Activated B cell treated with CpG ODN at 0.5 μM for 24 hours (primary cell): ENCODE measurements at regions of chr3 and their contacts with region 1.

Region 1: DNA sequence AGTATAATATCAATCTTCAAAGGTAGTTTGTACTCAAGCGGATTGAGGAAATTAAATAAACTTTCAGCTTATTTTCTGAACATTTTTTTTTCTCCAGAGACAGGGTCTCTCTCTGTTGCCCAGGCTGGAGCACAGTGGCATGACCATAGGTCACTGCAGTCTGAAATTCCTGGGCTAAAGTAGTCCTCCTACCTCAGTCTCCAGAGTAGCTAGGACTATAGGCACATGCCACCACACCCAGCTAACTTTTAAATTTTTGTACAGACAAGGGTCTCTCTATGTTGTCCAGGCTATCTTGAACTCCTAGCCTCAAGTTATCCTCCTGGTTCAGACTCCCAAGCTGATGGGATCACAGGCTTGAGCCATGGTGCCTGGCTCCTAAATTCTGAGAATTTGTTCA is 97.1 kb downstream of the FAIM start:
- DNase-seq: no peak
- ATAC-seq: no peak
- H3K4me3 Mint-ChIP-seq: no peak overlapping the region
- H3K27ac Mint-ChIP-seq: no peak overlapping the region
- H3K4me1 Mint-ChIP-seq: no peaks in the 10 kb centered on the region
- H3K27me3 Mint-ChIP-seq: no peaks in the 10 kb centered on the region
- CTCF ChIP-seq: no peak

Region 2: GRCh38 chr3:137032465-137033120 is 1673.1 kb before region 1 on chr3:
- CTCF ChIA-PET with region 1: no interaction called
- POLR2A ChIA-PET with region 1: no interaction called
- intact Hi-C with region 1: no loop called
- DNase-seq: peak; percentile 61
- ATAC-seq: peak; percentile 85
- H3K4me3 Mint-ChIP-seq: peak overlapping the region; percentile 68
- H3K27ac Mint-ChIP-seq: no peak overlapping the region
- H3K4me1 Mint-ChIP-seq: peaks cover 7% of the 10 kb centered on the region
- H3K27me3 Mint-ChIP-seq: peaks cover 32% of the 10 kb centered on the region
- CTCF ChIP-seq: peak; percentile 97

Region 3: DNA sequence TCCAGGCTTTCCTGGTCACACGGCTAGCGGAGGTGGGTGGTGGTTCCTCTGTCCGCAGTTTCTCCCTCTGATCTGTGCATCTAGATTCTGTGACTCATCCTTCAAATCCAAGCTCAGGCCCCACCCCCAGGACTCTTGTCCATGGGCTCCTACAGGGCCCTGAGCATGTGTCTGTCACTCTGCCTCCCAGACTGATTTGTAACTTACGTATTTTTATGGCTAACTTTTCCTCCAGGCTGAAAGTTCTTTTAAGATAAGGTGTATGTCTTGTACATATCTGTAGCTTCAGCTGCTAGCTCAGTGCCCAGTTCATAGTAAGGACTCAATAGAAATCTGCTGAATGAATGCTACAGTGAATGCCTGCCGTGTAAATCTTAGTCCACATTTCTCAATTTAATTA is 263.2 kb before region 1 on chr3:
- CTCF ChIA-PET with region 1: no interaction called
- POLR2A ChIA-PET with region 1: no interaction called
- intact Hi-C with region 1: no loop called
- DNase-seq: no peak
- ATAC-seq: no peak
- H3K4me3 Mint-ChIP-seq: no peak overlapping the region
- H3K27ac Mint-ChIP-seq: no peak overlapping the region
- H3K4me1 Mint-ChIP-seq: no peaks in the 10 kb centered on the region
- H3K27me3 Mint-ChIP-seq: peaks cover 21% of the 10 kb centered on the region
- CTCF ChIP-seq: no peak

Region 4: DNA sequence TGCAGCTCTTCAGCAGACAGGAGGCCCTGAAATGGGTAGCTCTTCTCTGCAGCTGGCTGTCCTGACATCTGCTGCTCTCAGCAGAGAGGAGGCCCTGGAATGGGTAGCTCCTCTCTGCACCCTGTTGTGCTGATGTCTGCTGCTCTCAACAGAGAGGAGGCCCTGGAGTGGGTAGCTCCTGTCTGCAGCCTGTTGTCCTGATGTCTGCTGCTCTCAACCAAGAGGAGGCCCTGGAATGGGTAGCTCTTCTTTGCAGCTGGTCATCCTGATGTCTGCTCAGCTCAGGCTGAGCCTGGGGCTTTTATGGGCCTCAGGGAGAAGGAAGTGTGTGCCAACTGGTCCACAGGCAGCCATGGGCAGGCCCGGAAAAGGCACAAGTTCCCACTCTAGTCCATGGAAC is 62.5 kb after region 1 on chr3:
- CTCF ChIA-PET with region 1: no interaction called
- POLR2A ChIA-PET with region 1: no interaction called
- intact Hi-C with region 1: loop called (anchors 10 kb)
- DNase-seq: no peak
- ATAC-seq: no peak
- H3K4me3 Mint-ChIP-seq: no peak overlapping the region
- H3K27ac Mint-ChIP-seq: no peak overlapping the region
- H3K4me1 Mint-ChIP-seq: no peaks in the 10 kb centered on the region
- H3K27me3 Mint-ChIP-seq: no peaks in the 10 kb centered on the region
- CTCF ChIP-seq: no peak